HCT116 (cell line): ENCODE measurements at regions of chr6 and their contacts with region 1.

Region 1: GRCh38 chr6:48826901-48827701 is 636.0 kb downstream of the MMUT start:
- DNase-seq: peak; percentile 99
- ATAC-seq: peak; percentile 94
- H3K4me3 ChIP-seq: peak overlapping the region; percentile 16 to 45
- H3K27ac ChIP-seq: peak overlapping the region; percentile 98
- H3K4me1 ChIP-seq: peaks cover 29 to 46% of the 10 kb centered on the region in 2 experiments
- H3K27me3 ChIP-seq: no peaks in the 10 kb centered on the region
- CTCF ChIP-seq: no peak
- POLR2A ChIP-seq: no peak
- RAD21 ChIP-seq: peak; percentile 46

Region 2: GRCh38 chr6:48552905-48553304 is 274.2 kb before region 1 on chr6:
- CTCF ChIA-PET with region 1: no interaction called
- POLR2A ChIA-PET with region 1: no interaction called
- RAD21 ChIA-PET with region 1: no interaction called
- intact Hi-C with region 1: no loop called
- DNase-seq: no peak
- ATAC-seq: no peak
- H3K4me3 ChIP-seq: no peak overlapping the region
- H3K27ac ChIP-seq: no peak overlapping the region
- H3K4me1 ChIP-seq: no peaks in the 10 kb centered on the region
- H3K27me3 ChIP-seq: no peaks in the 10 kb centered on the region
- CTCF ChIP-seq: no peak
- POLR2A ChIP-seq: no peak
- RAD21 ChIP-seq: no peak

Region 3: GRCh38 chr6:49409951-49410542 is 582.9 kb after region 1 on chr6:
- CTCF ChIA-PET with region 1: interaction called, 12 read pairs
- POLR2A ChIA-PET with region 1: interaction called, 3 read pairs
- RAD21 ChIA-PET with region 1: no interaction called
- intact Hi-C with region 1: no loop called
- DNase-seq: peak; percentile 54
- ATAC-seq: peak; percentile 89
- H3K4me3 ChIP-seq: no peak overlapping the region
- H3K27ac ChIP-seq: no peak overlapping the region
- H3K4me1 ChIP-seq: no peaks in the 10 kb centered on the region
- H3K27me3 ChIP-seq: no peaks in the 10 kb centered on the region
- CTCF ChIP-seq: peak; percentile 54 to 86 (median 84); a peak in 5 of 6 replicates
- POLR2A ChIP-seq: no peak
- RAD21 ChIP-seq: peak; percentile 82